ENCODE measurements at regions of chrX and their contacts with region 1.

Region 1: GRCh38 chrX:31423609-31424189 is 351.9 kb upstream of the FTHL17 start:
- DNase-seq: peak; percentile 60
- H3K4me3 Mint-ChIP-seq: no peak overlapping the region
- H3K27ac Mint-ChIP-seq: no peak overlapping the region
- H3K4me1 Mint-ChIP-seq: no peaks in the 10 kb centered on the region
- H3K27me3 Mint-ChIP-seq: no peaks in the 10 kb centered on the region
- CTCF ChIP-seq: peak; percentile 29

Region 2: GRCh38 chrX:31213941-31214340 is 209.8 kb before region 1 on chrX:
- CTCF ChIA-PET with region 1: no interaction called
- intact Hi-C with region 1: loop called (anchors 2 kb)
- DNase-seq: peak; percentile 36
- H3K4me3 Mint-ChIP-seq: no peak overlapping the region
- H3K27ac Mint-ChIP-seq: no peak overlapping the region
- H3K4me1 Mint-ChIP-seq: no peaks in the 10 kb centered on the region
- H3K27me3 Mint-ChIP-seq: no peaks in the 10 kb centered on the region
- CTCF ChIP-seq: no peak

Region 3: GRCh38 chrX:31353095-31353494 is 70.6 kb before region 1 on chrX:
- CTCF ChIA-PET with region 1: no interaction called
- intact Hi-C with region 1: loop called (anchors 5 kb)
- DNase-seq: peak; percentile 27
- H3K4me3 Mint-ChIP-seq: peak overlapping the region; percentile 3
- H3K27ac Mint-ChIP-seq: peak overlapping the region; percentile 0
- H3K4me1 Mint-ChIP-seq: peaks cover 45% of the 10 kb centered on the region
- H3K27me3 Mint-ChIP-seq: no peaks in the 10 kb centered on the region
- CTCF ChIP-seq: no peak

Region 4: DNA sequence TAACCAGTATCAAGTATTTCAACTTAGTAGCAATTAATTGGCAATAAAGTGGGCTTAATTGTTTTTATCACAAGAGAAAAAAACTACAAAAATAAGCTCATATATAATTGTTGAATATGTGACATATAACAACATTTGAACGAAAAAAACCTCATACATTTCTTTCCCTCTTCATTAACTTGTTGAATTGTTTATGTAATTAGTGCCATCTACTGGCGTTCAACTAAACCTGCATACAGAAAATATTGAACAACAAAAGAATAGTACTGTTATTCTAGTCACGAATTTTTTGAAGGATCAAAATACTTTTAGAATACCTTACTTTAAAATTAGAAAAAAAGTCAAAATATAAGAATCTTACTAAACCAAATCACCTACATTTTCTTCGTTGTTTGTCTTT is 234.7 kb after region 1 on chrX:
- CTCF ChIA-PET with region 1: no interaction called
- intact Hi-C with region 1: loop called (anchors 10 kb)
- DNase-seq: no peak
- H3K4me3 Mint-ChIP-seq: no peak overlapping the region
- H3K27ac Mint-ChIP-seq: no peak overlapping the region
- H3K4me1 Mint-ChIP-seq: peaks cover 7% of the 10 kb centered on the region
- H3K27me3 Mint-ChIP-seq: no peaks in the 10 kb centered on the region
- CTCF ChIP-seq: peak; percentile 17